Pancreas (tissue), 10 donors: ENCODE measurements at regions of chr6 and their contacts with region 1.

Region 1: GRCh38 chr6:154805288-154805911 is 72.2 kb downstream of the SCAF8 start:
- DNase-seq: no peak
- ATAC-seq: peak in 3 of 4 donors; percentile 82 to 85 (median 83)
- H3K4me3 ChIP-seq: no peak overlapping the region
- H3K27ac ChIP-seq: no peak overlapping the region
- H3K4me1 ChIP-seq: no peaks in the 10 kb centered on the region
- H3K27me3 ChIP-seq: no peaks in the 10 kb centered on the region
- CTCF ChIP-seq: peak in 3 of 4 donors; percentile 13 to 32 (median 20)

Region 2: GRCh38 chr6:154604119-154604518 is 201.3 kb before region 1 on chr6:
- intact Hi-C with region 1: no loop called
- DNase-seq: no peak
- ATAC-seq: peak in 1 of 4 donors; percentile 59
- H3K4me3 ChIP-seq: no peak overlapping the region
- H3K27ac ChIP-seq: no peak overlapping the region
- H3K4me1 ChIP-seq: no peaks in the 10 kb centered on the region
- H3K27me3 ChIP-seq: no peaks in the 10 kb centered on the region
- CTCF ChIP-seq: no peak

Region 3: GRCh38 chr6:154675602-154676088 is 129.8 kb before region 1 on chr6:
- intact Hi-C with region 1: loop called in 2 of 3 experiments (anchors 5 kb)
- DNase-seq: peak; percentile 81 to 94 (median 84)
- ATAC-seq: peak; percentile 98 to 100 (median 100)
- H3K4me3 ChIP-seq: no peak overlapping the region
- H3K27ac ChIP-seq: no peak overlapping the region
- H3K4me1 ChIP-seq: no peaks in the 10 kb centered on the region
- H3K27me3 ChIP-seq: no peaks in the 10 kb centered on the region
- CTCF ChIP-seq: peak; percentile 94 to 99 (median 97)